ENCODE measurements at regions of chr17 and their contacts with region 1.

Region 1: GRCh38 chr17:12053552-12053951 is 32.9 kb downstream of the MAP2K4 start:
- DNase-seq: no peak
- ATAC-seq: no peak
- H3K4me3 ChIP-seq: no peak overlapping the region
- H3K27ac ChIP-seq: no peak overlapping the region
- H3K4me1 ChIP-seq: peaks cover 0 to 63% (median 37%) of the 10 kb centered on the region in 9 donors
- H3K27me3 ChIP-seq: no peaks in the 10 kb centered on the region
- CTCF ChIP-seq: no peak

Region 2: DNA sequence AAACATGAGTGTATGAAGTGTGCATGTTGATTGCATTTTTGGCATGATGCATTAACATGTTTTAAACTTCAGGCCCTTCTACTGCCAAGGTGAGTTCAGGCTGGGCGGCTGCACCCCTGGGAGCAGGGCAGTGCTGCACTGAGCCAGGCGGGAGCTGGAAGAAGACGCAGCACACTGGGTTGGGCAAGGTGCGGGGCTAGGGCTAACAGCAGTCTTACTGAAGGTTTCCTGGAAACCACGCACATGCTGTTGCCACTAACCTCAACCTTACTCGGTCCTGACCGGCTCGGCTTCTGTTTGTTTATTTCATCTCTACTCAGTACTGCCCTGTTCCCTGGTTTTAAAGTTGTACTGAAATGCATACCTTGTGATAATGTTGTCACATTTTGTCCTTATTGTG is 28.2 kb after region 1 on chr17:
- intact Hi-C with region 1: loop called in 1 of 10 experiments (anchors 2 kb)
- DNase-seq: no peak
- ATAC-seq: peak in 4 of 8 donors; percentile 42 to 92 (median 69)
- H3K4me3 ChIP-seq: no peak overlapping the region
- H3K27ac ChIP-seq: no peak overlapping the region
- H3K4me1 ChIP-seq: peaks cover 0 to 16% (median 10%) of the 10 kb centered on the region in 9 donors
- H3K27me3 ChIP-seq: no peaks in the 10 kb centered on the region
- CTCF ChIP-seq: no peak

Region 3: GRCh38 chr17:12118617-12119016 is 65.1 kb after region 1 on chr17:
- intact Hi-C with region 1: loop called in 1 of 10 experiments (anchors 10 kb)
- DNase-seq: no peak
- ATAC-seq: no peak
- H3K4me3 ChIP-seq: no peak overlapping the region
- H3K27ac ChIP-seq: no peak overlapping the region
- H3K4me1 ChIP-seq: peaks cover 0 to 12% (median 6%) of the 10 kb centered on the region in 9 donors
- H3K27me3 ChIP-seq: no peaks in the 10 kb centered on the region
- CTCF ChIP-seq: no peak